ENCODE measurements at regions of chr3 and their contacts with region 1.

Region 1: GRCh38 chr3:152071924-152072323 is 196.8 kb upstream of the MBNL1 start:
- DNase-seq: no peak
- ATAC-seq: peak; percentile 96
- H3K4me3 ChIP-seq: no peak overlapping the region
- H3K27ac ChIP-seq: no peak overlapping the region
- H3K4me1 ChIP-seq: no peaks in the 10 kb centered on the region
- H3K27me3 ChIP-seq: no peaks in the 10 kb centered on the region
- CTCF ChIP-seq: peak; percentile 47 to 64 (median 60)
- EP300 ChIP-seq: no peak
- POLR2A ChIP-seq: no peak
- RAD21 ChIP-seq: peak; percentile 53

Region 2: GRCh38 chr3:152060701-152061100 is 11.2 kb before region 1 on chr3:
- CTCF ChIA-PET with region 1: interaction called, 12 read pairs
- POLR2A ChIA-PET with region 1: no interaction called
- RAD21 ChIA-PET with region 1: no interaction called
- SMC1A ChIA-PET with region 1: interaction called, 14 read pairs
- in situ Hi-C with region 1: no loop called
- intact Hi-C with region 1: no loop called
- DNase-seq: no peak
- ATAC-seq: no peak
- H3K4me3 ChIP-seq: no peak overlapping the region
- H3K27ac ChIP-seq: no peak overlapping the region
- H3K4me1 ChIP-seq: no peaks in the 10 kb centered on the region
- H3K27me3 ChIP-seq: no peaks in the 10 kb centered on the region
- CTCF ChIP-seq: no peak
- EP300 ChIP-seq: no peak
- POLR2A ChIP-seq: no peak
- RAD21 ChIP-seq: no peak

Region 3: GRCh38 chr3:152376351-152377183 is 304.6 kb after region 1 on chr3:
- CTCF ChIA-PET with region 1: interaction called, 3 read pairs
- POLR2A ChIA-PET with region 1: no interaction called
- RAD21 ChIA-PET with region 1: no interaction called
- SMC1A ChIA-PET with region 1: no interaction called
- in situ Hi-C with region 1: no loop called
- intact Hi-C with region 1: loop called (anchors 10 kb)
- DNase-seq: peak; percentile 97
- ATAC-seq: peak; percentile 83
- H3K4me3 ChIP-seq: no peak overlapping the region; the same call in 1 of the 2 replicates
- H3K27ac ChIP-seq: peak overlapping the region; percentile 90
- H3K4me1 ChIP-seq: peaks cover 30% of the 10 kb centered on the region
- H3K27me3 ChIP-seq: no peaks in the 10 kb centered on the region
- CTCF ChIP-seq: no peak
- EP300 ChIP-seq: peak; percentile 95 to 99
- POLR2A ChIP-seq: peak; percentile 53
- RAD21 ChIP-seq: no peak

Region 4: DNA sequence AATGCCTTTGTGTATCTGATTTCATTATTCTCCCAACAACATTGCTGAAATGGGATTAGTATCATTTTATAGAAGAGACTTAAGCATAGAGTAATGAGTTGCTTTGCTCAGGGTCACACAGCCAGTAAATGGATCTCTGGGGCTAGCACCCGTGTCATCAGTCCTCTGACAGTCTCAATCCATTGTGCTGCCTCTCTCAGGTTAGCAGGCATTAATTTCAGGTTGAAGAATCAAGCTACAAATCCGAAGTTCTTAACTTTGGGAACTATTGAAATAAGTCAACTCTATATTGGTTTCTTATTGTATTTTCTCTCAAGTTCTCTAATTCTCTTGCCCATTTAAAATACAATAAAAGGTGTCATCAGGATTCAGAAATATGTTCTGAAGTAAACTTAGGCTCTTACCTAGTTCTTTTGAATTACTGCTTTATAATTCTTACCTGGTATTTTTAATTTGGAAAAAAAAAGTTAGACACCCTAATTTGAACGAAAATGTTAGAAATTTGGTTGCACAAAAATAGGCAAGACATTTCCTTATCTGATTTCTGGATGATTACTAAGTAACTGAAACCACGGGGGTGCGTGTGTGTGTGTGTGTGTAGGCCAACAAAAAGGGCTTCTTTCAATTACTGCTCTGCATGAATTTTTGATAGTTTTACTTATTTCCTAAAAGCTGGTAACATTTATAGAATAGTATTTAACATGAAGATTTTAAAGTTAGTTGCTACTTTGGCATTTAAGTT is 386.6 kb after region 1 on chr3:
- CTCF ChIA-PET with region 1: interaction called, 3 read pairs
- POLR2A ChIA-PET with region 1: no interaction called
- RAD21 ChIA-PET with region 1: no interaction called
- SMC1A ChIA-PET with region 1: interaction called, 10 read pairs
- in situ Hi-C with region 1: no loop called
- intact Hi-C with region 1: no loop called
- DNase-seq: no peak
- ATAC-seq: no peak
- H3K4me3 ChIP-seq: no peak overlapping the region
- H3K27ac ChIP-seq: no peak overlapping the region
- H3K4me1 ChIP-seq: no peaks in the 10 kb centered on the region
- H3K27me3 ChIP-seq: no peaks in the 10 kb centered on the region
- CTCF ChIP-seq: no peak
- EP300 ChIP-seq: no peak
- POLR2A ChIP-seq: no peak
- RAD21 ChIP-seq: no peak

Region 5: DNA sequence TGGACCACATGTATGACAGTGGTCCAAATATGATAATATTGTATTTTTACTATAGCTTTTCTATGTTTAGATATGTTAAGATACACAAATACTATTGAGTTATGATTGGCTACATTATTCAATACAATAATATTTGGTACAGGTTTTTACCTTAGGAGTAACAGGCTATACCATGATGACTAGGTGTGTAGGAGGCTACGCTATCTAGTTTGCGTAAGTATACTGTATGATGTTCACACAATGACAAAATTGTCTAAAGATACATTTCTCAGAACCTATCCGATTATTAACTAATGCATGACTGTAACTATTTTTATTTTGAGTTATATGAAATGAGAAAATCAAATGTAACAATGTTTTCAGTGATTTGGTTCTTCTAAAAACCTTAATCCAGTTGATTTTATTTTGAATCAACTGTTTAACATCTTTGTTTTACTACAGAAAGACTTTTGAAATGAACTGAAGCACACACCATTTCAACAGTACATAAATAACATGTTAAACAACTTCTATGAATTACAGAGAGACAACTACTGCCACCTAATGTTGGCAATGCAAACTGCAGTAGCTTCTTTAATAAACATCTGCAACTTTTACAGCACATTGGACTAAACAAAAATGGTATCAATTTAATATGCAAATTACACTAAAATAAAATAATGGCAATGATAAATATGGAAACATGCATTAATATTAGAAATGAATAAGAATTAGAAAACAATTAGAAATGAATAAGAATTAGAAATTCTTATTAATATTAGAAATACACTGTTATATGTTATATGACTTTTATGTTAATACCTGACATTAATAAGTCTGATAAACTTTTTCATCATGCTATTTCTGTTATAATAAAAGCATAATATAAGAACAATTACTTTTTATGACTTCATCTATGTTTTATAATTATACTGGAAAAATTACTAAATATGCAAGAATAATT is 452.5 kb after region 1 on chr3:
- CTCF ChIA-PET with region 1: interaction called, 18 read pairs
- POLR2A ChIA-PET with region 1: no interaction called
- RAD21 ChIA-PET with region 1: interaction called, 9 read pairs
- SMC1A ChIA-PET with region 1: interaction called, 6 read pairs
- in situ Hi-C with region 1: no loop called
- intact Hi-C with region 1: no loop called
- DNase-seq: no peak
- ATAC-seq: peak; percentile 74
- H3K4me3 ChIP-seq: no peak overlapping the region
- H3K27ac ChIP-seq: no peak overlapping the region
- H3K4me1 ChIP-seq: no peaks in the 10 kb centered on the region
- H3K27me3 ChIP-seq: no peaks in the 10 kb centered on the region
- CTCF ChIP-seq: peak; percentile 69 to 80 (median 79); a peak in 5 of 6 replicates
- EP300 ChIP-seq: no peak
- POLR2A ChIP-seq: no peak
- RAD21 ChIP-seq: peak; percentile 90